Right ventricle myocardium superior (tissue), 1 donor: ENCODE measurements at regions of chr12 and their contacts with region 1.

Region 1: DNA sequence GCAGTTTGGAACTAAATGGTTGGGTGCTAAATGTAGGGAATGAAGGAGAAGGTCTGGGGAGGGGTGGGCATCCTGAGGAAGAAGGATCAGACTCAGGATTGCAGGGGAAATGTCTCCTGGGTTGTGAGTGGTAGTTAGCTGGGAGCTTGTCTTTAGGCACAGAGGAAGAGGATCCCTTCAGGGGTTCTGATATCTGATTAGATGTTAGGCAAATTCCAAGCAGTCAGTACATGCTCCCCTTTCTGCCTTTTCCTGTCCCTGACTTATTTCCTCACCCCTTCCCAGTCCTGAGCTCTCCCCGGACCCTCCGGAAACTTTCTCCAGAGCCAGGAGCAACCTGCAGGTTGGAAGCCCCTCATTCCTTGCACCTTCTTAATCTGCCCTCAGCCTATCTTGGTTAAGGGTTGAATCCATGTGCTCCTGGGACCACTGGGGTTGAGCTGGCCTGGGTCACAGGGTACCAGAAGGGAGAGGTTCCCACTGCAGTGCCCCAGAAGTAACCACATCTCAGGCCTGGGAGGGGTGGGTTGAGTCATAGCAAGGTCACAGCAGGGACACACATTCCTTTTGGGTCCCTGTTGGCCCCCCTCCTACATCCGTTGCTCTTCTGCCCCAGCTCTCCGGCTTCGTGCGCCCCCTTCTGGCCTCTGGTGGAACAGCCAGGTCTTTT is 1.6 kb downstream of the IGFBP6 start:
- DNase-seq: peak; percentile 95
- ATAC-seq: peak; percentile 78

Region 2: GRCh38 chr12:53065975-53066931 is 32.9 kb before region 1 on chr12:
- intact Hi-C with region 1: loop called (anchors 2 kb)
- DNase-seq: peak; percentile 85
- ATAC-seq: peak; percentile 63